Activated CD8-positive, alpha-beta T cell treated with anti-CD3 and anti-CD28 coated beads, Interleukin-2, amount 10 ng/mL, durations not matched to agents 7 days and 5 days (primary cell): ENCODE measurements at regions of chr15 and their contacts with region 1.

Region 1: DNA sequence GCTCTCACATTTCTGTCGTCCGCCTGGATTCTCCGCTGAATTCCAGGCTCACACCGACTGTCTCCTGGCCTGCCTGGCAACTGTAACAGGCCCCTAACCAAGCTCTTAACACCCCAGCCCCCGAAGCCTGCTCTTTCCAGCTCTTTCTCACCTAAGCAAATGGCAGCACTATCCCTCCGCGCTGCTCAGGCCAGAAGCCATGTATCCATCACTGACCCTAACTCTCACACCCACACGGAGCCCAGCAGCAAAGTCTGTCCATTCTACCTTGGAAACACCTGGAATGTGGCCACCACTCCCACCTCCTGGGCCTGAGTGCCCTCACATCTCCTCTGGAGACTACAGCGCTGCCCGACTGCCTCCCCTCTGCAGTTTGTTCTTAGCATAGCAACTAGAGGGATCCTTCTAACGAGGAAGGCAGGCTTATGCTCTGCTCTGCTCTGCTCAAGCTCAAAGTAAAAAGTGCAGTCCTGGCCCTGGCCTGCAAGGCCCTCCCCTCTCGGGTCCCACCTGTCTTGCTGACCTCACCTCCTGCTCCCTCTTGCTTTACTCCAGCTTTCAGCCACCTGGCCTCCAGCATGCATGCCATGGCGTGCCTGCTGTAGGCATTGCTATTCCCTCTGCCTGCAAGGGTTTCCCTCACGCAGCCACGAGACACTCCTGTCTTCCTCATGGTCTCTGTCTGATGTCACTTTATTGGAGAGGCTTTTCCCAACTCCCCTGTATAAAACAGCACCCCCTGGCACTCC is 27.2 kb downstream of the FEM1B start:
- DNase-seq: no peak
- ATAC-seq: no peak
- H3K4me3 Mint-ChIP-seq: no peak overlapping the region
- H3K27ac Mint-ChIP-seq: no peak overlapping the region
- H3K4me1 Mint-ChIP-seq: peaks cover 20% of the 10 kb centered on the region
- H3K27me3 Mint-ChIP-seq: peaks cover 5% of the 10 kb centered on the region

Region 2: GRCh38 chr15:68097029-68097428 is 207.7 kb before region 1 on chr15:
- CTCF ChIA-PET with region 1: no interaction called
- POLR2A ChIA-PET with region 1: no interaction called
- DNase-seq: no peak
- ATAC-seq: no peak
- H3K4me3 Mint-ChIP-seq: no peak overlapping the region
- H3K27ac Mint-ChIP-seq: no peak overlapping the region
- H3K4me1 Mint-ChIP-seq: peaks cover 26% of the 10 kb centered on the region
- H3K27me3 Mint-ChIP-seq: no peaks in the 10 kb centered on the region

Region 3: GRCh38 chr15:68252925-68253534 is 51.7 kb before region 1 on chr15:
- CTCF ChIA-PET with region 1: interaction called, 152 read pairs
- POLR2A ChIA-PET with region 1: interaction called, 5 read pairs
- DNase-seq: peak; percentile 63
- ATAC-seq: peak; percentile 63
- H3K4me3 Mint-ChIP-seq: no peak overlapping the region
- H3K27ac Mint-ChIP-seq: no peak overlapping the region
- H3K4me1 Mint-ChIP-seq: peaks cover 7% of the 10 kb centered on the region
- H3K27me3 Mint-ChIP-seq: peaks cover 27% of the 10 kb centered on the region

Region 4: GRCh38 chr15:68292157-68292781 is 12.5 kb before region 1 on chr15:
- CTCF ChIA-PET with region 1: interaction called, 26 read pairs
- POLR2A ChIA-PET with region 1: no interaction called
- DNase-seq: no peak
- ATAC-seq: peak; percentile 61
- H3K4me3 Mint-ChIP-seq: no peak overlapping the region
- H3K27ac Mint-ChIP-seq: no peak overlapping the region
- H3K4me1 Mint-ChIP-seq: peaks cover 33% of the 10 kb centered on the region
- H3K27me3 Mint-ChIP-seq: no peaks in the 10 kb centered on the region

Region 5: DNA sequence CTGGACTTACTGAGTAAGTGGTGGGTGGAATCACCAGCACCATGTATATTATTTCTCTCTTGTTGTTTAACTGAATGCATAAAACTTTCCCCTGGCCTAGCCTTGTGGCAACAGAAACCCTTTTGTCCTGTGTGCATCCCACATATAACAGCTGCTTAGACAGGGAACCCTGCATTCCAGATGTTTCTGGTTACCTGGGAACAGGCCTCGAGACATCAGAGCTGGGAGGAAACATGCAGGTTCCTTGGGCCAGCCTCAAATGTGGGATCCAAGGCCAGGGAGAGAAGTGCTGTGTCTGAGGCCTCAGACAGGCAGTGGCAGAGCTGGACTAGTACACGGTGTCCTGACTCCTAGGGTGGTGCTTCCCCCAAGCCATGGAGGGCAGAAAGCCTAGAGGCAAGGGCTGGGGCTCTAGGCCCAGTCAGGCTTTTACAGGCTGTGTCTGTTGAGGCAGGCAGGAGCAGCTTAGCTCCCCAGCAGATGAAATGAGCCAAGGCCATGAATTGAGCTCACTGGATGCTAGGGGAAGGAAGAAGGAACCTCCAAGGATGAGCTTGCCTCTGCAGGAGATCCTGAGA is 69.5 kb after region 1 on chr15:
- CTCF ChIA-PET with region 1: interaction called, 143 read pairs
- POLR2A ChIA-PET with region 1: no interaction called
- DNase-seq: no peak
- ATAC-seq: no peak
- H3K4me3 Mint-ChIP-seq: no peak overlapping the region
- H3K27ac Mint-ChIP-seq: no peak overlapping the region
- H3K4me1 Mint-ChIP-seq: peaks cover 7% of the 10 kb centered on the region
- H3K27me3 Mint-ChIP-seq: no peaks in the 10 kb centered on the region

Region 6: GRCh38 chr15:68396068-68396467 is 91.3 kb after region 1 on chr15:
- CTCF ChIA-PET with region 1: interaction called, 30 read pairs
- POLR2A ChIA-PET with region 1: no interaction called
- DNase-seq: no peak
- ATAC-seq: no peak
- H3K4me3 Mint-ChIP-seq: no peak overlapping the region
- H3K27ac Mint-ChIP-seq: no peak overlapping the region
- H3K4me1 Mint-ChIP-seq: peaks cover 9% of the 10 kb centered on the region
- H3K27me3 Mint-ChIP-seq: peaks cover 36% of the 10 kb centered on the region

Region 7: GRCh38 chr15:68672781-68673205 is 368.0 kb after region 1 on chr15:
- CTCF ChIA-PET with region 1: interaction called, 31 read pairs
- POLR2A ChIA-PET with region 1: no interaction called
- DNase-seq: no peak
- ATAC-seq: no peak
- H3K4me3 Mint-ChIP-seq: no peak overlapping the region
- H3K27ac Mint-ChIP-seq: no peak overlapping the region
- H3K4me1 Mint-ChIP-seq: peaks cover 4% of the 10 kb centered on the region
- H3K27me3 Mint-ChIP-seq: peaks cover 15% of the 10 kb centered on the region